ENCODE measurements at regions of chr2 and their contacts with region 1.

Region 1: DNA sequence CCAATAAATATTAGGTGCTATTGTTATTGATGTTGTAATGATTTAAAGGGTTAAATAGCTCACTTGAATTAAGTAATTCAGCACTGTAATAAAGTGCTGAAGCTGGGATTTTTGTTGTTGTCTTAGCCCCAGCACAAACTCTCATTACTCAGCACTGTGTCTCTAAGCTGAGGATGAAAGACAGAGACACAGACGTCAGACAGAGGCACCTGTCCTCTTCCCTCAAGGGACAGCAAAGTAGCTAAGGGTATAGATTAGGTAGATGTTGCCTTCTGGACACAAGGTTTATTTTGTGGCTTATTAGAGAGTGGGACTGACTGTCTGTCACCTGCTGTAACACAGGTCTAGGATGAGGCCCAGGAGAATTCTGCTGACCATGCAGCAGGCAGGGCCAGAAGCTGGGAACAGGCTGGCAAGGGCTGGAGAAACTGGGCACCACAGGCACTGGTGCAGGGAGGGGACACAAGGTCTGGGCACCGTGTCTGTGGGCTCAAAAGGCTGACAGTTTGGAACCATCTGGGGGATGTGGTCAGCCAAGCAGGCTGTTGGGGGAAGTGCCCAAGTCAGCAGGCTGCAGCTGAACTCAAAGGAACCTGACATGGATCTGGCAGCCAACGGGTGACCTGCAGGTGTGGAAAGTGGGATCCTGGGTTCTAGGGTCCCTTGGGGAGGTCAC is 20.0 kb upstream of the PTPN4 start:
- DNase-seq: no peak
- H3K4me3 ChIP-seq: no peak overlapping the region
- H3K4me3 Mint-ChIP-seq: no peak overlapping the region
- H3K27ac ChIP-seq: no peak overlapping the region
- H3K27ac Mint-ChIP-seq: no peak overlapping the region
- H3K4me1 ChIP-seq: no peaks in the 10 kb centered on the region
- H3K4me1 Mint-ChIP-seq: no peaks in the 10 kb centered on the region
- H3K27me3 ChIP-seq: no peaks in the 10 kb centered on the region
- H3K27me3 Mint-ChIP-seq: peaks cover 0 to 6% of the 10 kb centered on the region in 2 donors

Region 2: GRCh38 chr2:119753041-119753929 is 13.6 kb after region 1 on chr2:
- CTCF ChIA-PET with region 1: interaction called, 22 read pairs
- POLR2A ChIA-PET with region 1: no interaction called
- intact Hi-C with region 1: no loop called
- DNase-seq: peak in 4 of 5 donors; percentile 47 to 58 (median 56)
- H3K4me3 ChIP-seq: no peak overlapping the region
- H3K4me3 Mint-ChIP-seq: no peak overlapping the region
- H3K27ac ChIP-seq: no peak overlapping the region
- H3K27ac Mint-ChIP-seq: no peak overlapping the region
- H3K4me1 ChIP-seq: no peaks in the 10 kb centered on the region
- H3K4me1 Mint-ChIP-seq: peaks cover under 1 to 5% (median 4%) of the 10 kb centered on the region in 4 donors
- H3K27me3 ChIP-seq: no peaks in the 10 kb centered on the region
- H3K27me3 Mint-ChIP-seq: no peaks in the 10 kb centered on the region